ENCODE measurements at regions of chr3 and their contacts with region 1.

Region 1: DNA sequence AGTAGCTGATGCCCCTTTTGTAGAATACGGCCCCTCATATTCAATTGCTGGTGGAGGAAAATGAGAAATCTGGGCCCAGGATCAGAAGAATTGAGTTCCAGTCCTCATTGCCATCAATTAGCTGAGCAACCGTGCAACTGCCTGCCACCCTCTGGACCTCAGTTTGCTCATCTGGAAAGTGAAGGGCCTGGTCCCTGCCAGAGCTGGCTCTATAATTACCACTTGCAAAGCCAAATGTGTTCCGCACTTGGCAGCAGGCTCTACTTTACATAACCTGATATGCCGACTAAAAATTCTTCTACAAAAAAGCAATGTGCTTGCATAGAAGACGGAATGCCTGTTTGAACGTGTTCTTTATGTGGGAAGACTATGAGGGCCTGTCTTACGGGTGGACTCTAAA is 8.6 kb upstream of the ITGB5 start:
- DNase-seq: no peak
- H3K4me3 ChIP-seq: no peak overlapping the region
- H3K27ac ChIP-seq: no peak overlapping the region
- H3K4me1 ChIP-seq: peaks cover 0 to 9% of the 10 kb centered on the region in 2 experiments; a peak in 2 of 4 replicates
- H3K27me3 ChIP-seq: no peaks in the 10 kb centered on the region
- CTCF ChIP-seq: no peak
- EP300 ChIP-seq: no peak
- RAD21 ChIP-seq: no peak

Region 2: DNA sequence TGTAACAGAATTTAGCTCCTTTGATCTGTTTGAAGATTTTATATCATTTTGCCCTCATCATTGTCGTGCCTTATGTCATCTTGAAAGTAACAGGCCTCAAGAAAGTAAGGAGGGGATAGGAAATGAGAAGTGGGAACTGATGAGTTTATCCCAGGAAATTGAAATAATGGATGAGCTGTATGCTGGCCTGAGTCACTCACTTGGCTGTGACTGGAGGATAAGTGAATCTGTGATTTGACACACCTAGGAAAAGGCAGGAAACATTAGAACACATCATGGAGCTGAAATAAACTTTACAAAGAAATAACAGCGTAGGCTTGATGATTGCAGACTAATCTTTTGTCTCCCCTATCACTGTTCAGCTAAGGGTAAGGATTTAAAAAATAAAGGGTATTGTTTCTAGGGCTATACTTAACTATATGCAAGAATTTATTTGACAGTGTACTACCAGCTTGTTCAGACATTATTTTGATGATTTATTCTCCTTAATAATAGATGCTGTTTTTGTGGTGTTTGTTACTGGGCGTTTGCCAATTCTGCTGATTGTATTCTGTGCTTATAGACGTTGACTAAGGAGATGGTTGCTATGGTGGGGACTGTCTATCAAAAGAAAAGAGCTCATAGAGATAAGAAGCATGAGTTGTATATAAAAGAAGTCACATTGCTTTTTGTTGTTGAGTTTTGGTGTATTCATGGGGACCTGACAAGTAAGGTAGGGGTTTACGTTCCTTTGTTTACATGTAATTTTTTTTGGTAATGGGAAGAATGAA is 798.2 kb before region 1 on chr3:
- CTCF ChIA-PET with region 1: no interaction called
- POLR2A ChIA-PET with region 1: no interaction called
- DNase-seq: no peak
- H3K4me3 ChIP-seq: no peak overlapping the region
- H3K27ac ChIP-seq: 0 out of 4 replicates have a peak overlapping the region, but pooled peaks of 1 of the 2 experiments have one; percentile 2
- H3K4me1 ChIP-seq: peaks cover 3 to 5% of the 10 kb centered on the region in 2 experiments; a peak in 2 of 4 replicates
- H3K27me3 ChIP-seq: no peaks in the 10 kb centered on the region
- CTCF ChIP-seq: no peak
- EP300 ChIP-seq: no peak
- RAD21 ChIP-seq: no peak

Region 3: GRCh38 chr3:124786441-124787241 is 109.1 kb before region 1 on chr3:
- CTCF ChIA-PET with region 1: interaction called, 114 read pairs
- POLR2A ChIA-PET with region 1: no interaction called
- DNase-seq: no peak
- H3K4me3 ChIP-seq: no peak overlapping the region
- H3K27ac ChIP-seq: peak overlapping the region; percentile 47 to 83; a peak in 3 of 4 replicates
- H3K4me1 ChIP-seq: peaks cover 21 to 33% of the 10 kb centered on the region in 2 experiments
- H3K27me3 ChIP-seq: no peaks in the 10 kb centered on the region
- CTCF ChIP-seq: peak; percentile 66
- EP300 ChIP-seq: no peak
- RAD21 ChIP-seq: peak; percentile 63

Measured in SK-N-SH (cell line).